Activated CD4-positive, alpha-beta T cell treated with anti-CD3 and anti-CD28 coated beads for 36 hours (primary cell): ENCODE measurements at regions of chr13 and their contacts with region 1.

Region 1: GRCh38 chr13:49936085-49936940 is at the start of gene SPRYD7:
- DNase-seq: peak; percentile 98
- ATAC-seq: peak; percentile 98
- H3K4me3 Mint-ChIP-seq: peak within 1 kb of the TSS; percentile 84
- H3K27ac Mint-ChIP-seq: peak within 1 kb of the TSS; percentile 73
- H3K4me1 Mint-ChIP-seq: peaks cover 11% of the 10 kb centered on the region
- H3K27me3 Mint-ChIP-seq: no peaks in the 10 kb centered on the region
- total RNA-seq, gene SPRYD7: 4.8 to 4.9 TPM

Region 2: GRCh38 chr13:49247643-49248621 is 688.4 kb before region 1 on chr13 and contains the start of gene CDADC1:
- CTCF ChIA-PET with region 1: no interaction called
- POLR2A ChIA-PET with region 1: no interaction called
- intact Hi-C with region 1: loop called in 1 of 2 experiments (anchors 1 kb)
- DNase-seq: peak; percentile 96
- ATAC-seq: peak; percentile 94
- H3K4me3 Mint-ChIP-seq: peak within 1 kb of the TSS; percentile 92
- H3K27ac Mint-ChIP-seq: peak within 1 kb of the TSS; percentile 96
- H3K4me1 Mint-ChIP-seq: peaks cover 34% of the 10 kb centered on the region
- H3K27me3 Mint-ChIP-seq: peaks cover 2% of the 10 kb centered on the region
- total RNA-seq, gene CDADC1: 8.5 to 9.7 TPM

Region 3: DNA sequence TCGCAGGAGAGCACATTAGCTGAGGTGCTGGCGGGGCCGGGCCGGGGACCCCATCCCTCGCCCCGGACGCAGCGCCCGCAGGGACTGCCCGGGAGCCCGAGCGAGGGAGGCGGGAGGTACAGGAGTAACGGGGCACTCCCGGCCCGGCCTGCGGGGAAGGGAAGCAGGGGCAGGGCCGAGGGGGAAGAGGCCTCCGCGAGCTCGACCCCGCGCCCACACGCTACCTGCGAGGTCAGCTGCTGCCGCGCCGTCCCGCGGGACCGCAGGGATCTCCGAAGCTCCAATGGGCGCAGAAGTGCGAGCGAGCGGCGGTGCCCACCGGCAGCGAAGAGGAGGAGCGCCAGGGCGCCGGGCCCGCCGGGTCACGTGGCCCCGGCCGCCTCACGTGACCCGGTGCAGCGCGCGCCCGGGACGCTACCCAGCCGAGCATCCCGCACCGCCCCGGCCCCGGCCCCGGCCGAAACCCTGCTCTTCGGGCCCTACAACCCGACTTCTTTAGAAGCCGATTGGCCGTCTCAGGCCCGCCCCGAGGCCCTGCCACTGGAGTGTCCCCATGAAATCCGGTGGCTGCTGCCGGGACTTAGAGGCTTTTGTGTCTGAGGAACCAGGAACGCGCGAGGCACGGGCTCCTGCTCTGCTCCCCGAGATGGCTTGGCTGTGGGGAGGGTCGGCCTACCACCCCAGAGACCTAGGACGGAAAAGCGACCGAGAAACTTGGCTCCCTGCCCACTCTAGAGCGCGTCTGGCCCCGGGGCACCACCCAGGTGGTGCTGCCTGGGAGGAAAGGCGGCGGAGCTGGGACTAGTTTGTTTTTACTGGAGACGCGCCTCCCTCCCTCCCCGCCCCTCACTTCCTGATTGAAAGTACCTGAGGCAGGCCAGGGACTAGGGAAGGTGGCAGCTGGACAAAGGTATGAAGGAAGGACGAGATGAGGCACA is 350.8 kb before region 1 on chr13 and contains the start of gene RCBTB1:
- CTCF ChIA-PET with region 1: no interaction called
- POLR2A ChIA-PET with region 1: no interaction called
- intact Hi-C with region 1: loop called in 1 of 2 experiments (anchors 2 kb)
- DNase-seq: peak; percentile 80
- ATAC-seq: peak; percentile 95
- H3K4me3 Mint-ChIP-seq: peak within 1 kb of the TSS; percentile 99
- H3K27ac Mint-ChIP-seq: peak within 1 kb of the TSS; percentile 95
- H3K4me1 Mint-ChIP-seq: peaks cover 29% of the 10 kb centered on the region
- H3K27me3 Mint-ChIP-seq: no peaks in the 10 kb centered on the region
- total RNA-seq, gene RCBTB1: 9.8 to 14.9 TPM

Region 4: GRCh38 chr13:49690992-49691886 is 245.1 kb before region 1 on chr13 and contains the start of gene EBPL:
- CTCF ChIA-PET with region 1: no interaction called
- POLR2A ChIA-PET with region 1: no interaction called
- intact Hi-C with region 1: loop called in 1 of 2 experiments (anchors 1 kb)
- DNase-seq: peak; percentile 95
- ATAC-seq: peak; percentile 98
- H3K4me3 Mint-ChIP-seq: peak within 1 kb of the TSS; percentile 87
- H3K27ac Mint-ChIP-seq: peak within 1 kb of the TSS; percentile 84
- H3K4me1 Mint-ChIP-seq: peaks cover 30% of the 10 kb centered on the region
- H3K27me3 Mint-ChIP-seq: no peaks in the 10 kb centered on the region
- total RNA-seq, gene EBPL: 40.7 to 55.8 TPM

Region 5: DNA sequence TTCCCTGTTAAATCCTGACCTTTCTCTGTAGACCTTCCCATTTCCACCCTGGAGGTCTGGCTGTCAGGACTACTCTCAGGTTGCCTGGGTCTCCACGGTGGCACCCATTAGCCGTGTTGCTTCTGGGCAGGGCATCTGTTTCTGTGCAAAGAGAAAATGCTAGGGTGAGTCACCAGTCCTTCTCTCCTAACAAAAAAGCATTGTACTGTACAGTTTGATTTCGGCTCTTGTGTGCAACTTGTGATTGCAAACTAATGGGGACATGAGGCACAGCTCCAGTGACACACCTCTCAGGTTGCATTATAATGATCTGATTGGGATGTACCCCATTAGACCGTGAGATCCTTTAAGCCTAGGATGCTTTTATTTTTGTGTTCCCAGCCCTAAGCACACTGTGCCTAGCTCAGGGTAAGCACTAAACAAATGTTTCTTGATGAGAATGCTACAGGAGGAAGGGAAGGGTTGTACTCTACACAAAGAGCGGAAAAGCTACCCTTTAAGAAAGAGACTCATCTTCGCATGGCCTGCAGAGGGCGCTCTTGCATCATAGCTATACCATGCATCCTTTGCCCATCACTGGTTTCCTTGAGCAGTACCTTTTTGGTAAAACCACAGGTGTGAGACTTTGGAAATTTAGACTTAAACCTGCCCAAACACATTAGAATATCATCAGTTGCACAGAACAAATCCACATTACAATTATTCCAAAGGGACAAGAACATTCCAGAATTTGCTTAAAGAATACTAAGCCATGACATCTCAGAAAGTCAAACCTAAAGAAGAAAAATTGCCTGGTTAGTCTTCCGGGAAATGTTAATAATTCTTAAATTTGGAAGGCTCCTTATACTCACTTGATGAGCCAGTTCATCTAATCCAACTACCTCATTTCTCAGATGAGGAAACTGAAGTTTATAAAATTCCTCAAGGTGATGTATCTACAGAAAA is 40.3 kb after region 1 on chr13:
- CTCF ChIA-PET with region 1: interaction called, 11 read pairs
- POLR2A ChIA-PET with region 1: no interaction called
- intact Hi-C with region 1: no loop called
- DNase-seq: peak; percentile 87
- ATAC-seq: peak; percentile 83
- H3K4me3 Mint-ChIP-seq: no peak overlapping the region
- H3K27ac Mint-ChIP-seq: no peak overlapping the region
- H3K4me1 Mint-ChIP-seq: no peaks in the 10 kb centered on the region
- H3K27me3 Mint-ChIP-seq: no peaks in the 10 kb centered on the region

Region 6: DNA sequence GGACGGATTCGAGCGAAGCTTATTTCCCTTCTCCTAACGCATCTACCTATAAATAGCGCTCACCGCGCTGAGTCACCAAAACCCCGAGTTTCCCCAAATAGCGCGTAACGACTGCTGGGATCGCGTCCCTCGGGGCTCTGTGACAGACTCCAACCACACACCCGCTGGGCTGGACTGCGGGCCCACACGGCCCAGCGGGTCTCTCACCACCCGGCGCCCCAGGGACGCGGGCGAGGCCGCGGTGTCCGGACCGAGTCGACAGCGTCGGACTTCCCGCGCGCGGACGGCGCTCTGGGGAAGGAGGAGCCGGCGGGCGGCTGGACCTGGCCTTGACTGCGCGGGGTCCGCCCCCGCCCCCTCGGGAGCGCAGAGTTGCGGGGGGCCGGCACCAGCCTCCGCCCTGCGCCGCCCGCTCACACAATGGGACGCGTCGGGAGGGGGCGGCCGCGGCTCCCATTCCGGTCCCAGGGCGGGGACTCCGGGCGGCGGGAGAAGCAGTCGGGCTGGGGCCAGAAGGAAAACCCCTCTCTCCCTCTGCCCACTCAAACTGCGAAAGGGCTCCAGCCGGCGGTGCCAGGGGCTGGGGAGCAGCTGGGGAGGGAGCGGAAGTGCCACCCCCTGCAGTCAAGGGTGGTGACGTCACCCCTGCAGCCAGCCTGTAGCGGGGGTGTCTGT is 187.7 kb after region 1 on chr13:
- CTCF ChIA-PET with region 1: no interaction called
- POLR2A ChIA-PET with region 1: no interaction called
- intact Hi-C with region 1: loop called in 1 of 2 experiments (anchors 1 kb)
- DNase-seq: peak; percentile 86
- ATAC-seq: peak; percentile 68
- H3K4me3 Mint-ChIP-seq: peak overlapping the region; percentile 72
- H3K27ac Mint-ChIP-seq: peak overlapping the region; percentile 89
- H3K4me1 Mint-ChIP-seq: peaks cover 49% of the 10 kb centered on the region
- H3K27me3 Mint-ChIP-seq: peaks cover 13% of the 10 kb centered on the region